ENCODE measurements at regions of chr3 and their contacts with region 1.

Region 1: DNA sequence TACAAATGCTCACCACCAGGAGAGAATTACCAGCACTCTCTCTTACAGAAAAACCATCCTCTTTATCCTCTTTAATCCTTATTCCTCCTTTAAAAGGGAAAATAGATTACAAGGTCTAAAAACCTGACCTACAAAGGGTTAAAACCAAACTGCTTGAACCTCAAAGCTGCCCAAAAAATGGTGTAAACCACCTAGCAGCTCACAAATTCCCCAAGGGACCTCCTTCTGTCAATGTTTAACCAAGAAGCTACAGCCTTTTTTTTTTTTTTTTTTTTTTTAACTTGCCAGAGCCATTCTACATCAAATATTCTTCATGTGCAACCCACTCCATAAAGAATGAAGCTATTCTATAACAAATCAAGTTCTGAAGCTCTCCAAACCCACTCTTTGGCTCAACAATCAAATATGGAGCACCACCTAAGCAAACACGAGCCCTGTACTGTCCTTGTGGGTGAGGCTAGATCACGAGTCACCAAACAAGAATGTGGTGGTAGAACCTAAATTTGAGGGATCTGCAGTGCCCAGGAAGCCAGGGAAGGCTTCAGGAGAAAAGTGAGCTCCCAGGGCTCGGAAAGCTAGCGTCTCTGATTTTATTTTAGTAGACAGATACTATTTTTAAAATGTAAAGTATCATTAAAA is 20.1 kb downstream of the OSBPL10 start:
- DNase-seq: no peak
- ATAC-seq: peak; percentile 69
- H3K4me3 ChIP-seq: 0 out of 4 replicates have a peak overlapping the region, but pooled peaks of 1 of the 2 experiments have one; percentile 6
- H3K27ac ChIP-seq: peak overlapping the region; percentile 90
- H3K4me1 ChIP-seq: peaks cover 51% of the 10 kb centered on the region
- H3K27me3 ChIP-seq: no peaks in the 10 kb centered on the region
- CTCF ChIP-seq: no peak

Region 2: GRCh38 chr3:31936420-31937060 is 24.4 kb before region 1 on chr3:
- CTCF ChIA-PET with region 1: no interaction called
- POLR2A ChIA-PET with region 1: no interaction called
- in situ Hi-C with region 1: no loop called
- intact Hi-C with region 1: no loop called
- DNase-seq: no peak
- ATAC-seq: no peak
- H3K4me3 ChIP-seq: no peak overlapping the region
- H3K27ac ChIP-seq: no peak overlapping the region; the same call in 1 of the 2 replicates
- H3K4me1 ChIP-seq: peaks cover 31% of the 10 kb centered on the region
- H3K27me3 ChIP-seq: no peaks in the 10 kb centered on the region
- CTCF ChIP-seq: no peak

Region 3: GRCh38 chr3:32825601-32826375 is 864.9 kb after region 1 on chr3:
- CTCF ChIA-PET with region 1: no interaction called
- POLR2A ChIA-PET with region 1: interaction called, 15 read pairs
- in situ Hi-C with region 1: no loop called
- intact Hi-C with region 1: no loop called
- DNase-seq: no peak
- ATAC-seq: no peak
- H3K4me3 ChIP-seq: no peak overlapping the region
- H3K27ac ChIP-seq: no peak overlapping the region
- H3K4me1 ChIP-seq: no peaks in the 10 kb centered on the region
- H3K27me3 ChIP-seq: no peaks in the 10 kb centered on the region; the same call in none of the 2 replicates
- CTCF ChIP-seq: no peak

Region 4: GRCh38 chr3:33186524-33187367 is 1225.8 kb after region 1 on chr3:
- CTCF ChIA-PET with region 1: no interaction called
- POLR2A ChIA-PET with region 1: interaction called, 11 read pairs
- in situ Hi-C with region 1: no loop called
- intact Hi-C with region 1: no loop called
- DNase-seq: no peak
- ATAC-seq: peak; percentile 78
- H3K4me3 ChIP-seq: no peak overlapping the region
- H3K27ac ChIP-seq: no peak overlapping the region
- H3K4me1 ChIP-seq: peaks cover 5% of the 10 kb centered on the region; the same call in 1 of the 2 replicates
- H3K27me3 ChIP-seq: no peaks in the 10 kb centered on the region
- CTCF ChIP-seq: no peak

Measured in Panc1 (cell line).